ENCODE measurements at regions of chr6 and their contacts with region 1.

Region 1: DNA sequence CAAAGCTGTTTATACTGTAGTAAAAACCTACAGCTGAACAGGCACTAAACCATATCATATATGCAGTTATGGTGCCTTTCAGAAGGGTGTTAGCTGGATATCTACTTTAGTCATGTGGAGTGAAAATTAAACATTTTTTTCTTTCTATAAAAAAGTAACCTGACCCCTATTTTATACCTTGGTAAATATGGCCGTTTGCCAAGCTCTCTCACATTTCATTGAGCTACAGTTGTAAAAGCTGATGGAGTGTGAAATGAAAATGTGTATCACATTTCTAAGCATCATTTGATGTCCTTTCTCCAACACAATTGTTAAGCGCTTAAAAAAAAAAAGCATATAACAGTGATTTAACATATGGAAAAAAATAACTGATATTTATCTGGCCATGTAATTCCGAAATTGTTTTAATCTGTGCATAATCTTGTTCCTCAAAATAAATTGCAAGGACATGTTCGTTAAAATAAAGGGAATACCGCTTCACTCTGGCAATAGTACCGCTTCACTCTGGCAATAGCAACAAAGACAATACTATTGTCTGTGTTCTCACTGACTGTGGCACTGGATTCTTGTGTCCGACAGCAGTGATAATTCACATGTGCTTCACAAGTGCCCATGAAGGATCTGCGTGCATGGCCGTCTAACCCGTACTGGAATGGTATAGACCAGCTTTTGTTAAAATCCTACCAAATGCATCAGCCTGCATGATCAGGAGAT is 391.8 kb upstream of the SOX4 start:
- DNase-seq: no peak
- ATAC-seq: no peak
- H3K4me3 ChIP-seq: no peak overlapping the region
- H3K27ac ChIP-seq: no peak overlapping the region
- H3K4me1 ChIP-seq: peaks cover 1% of the 10 kb centered on the region; the same call in 1 of the 2 replicates
- H3K27me3 ChIP-seq: no peaks in the 10 kb centered on the region
- CTCF ChIP-seq: no peak
- POLR2A ChIP-seq: no peak
- RAD21 ChIP-seq: no peak

Region 2: GRCh38 chr6:21188505-21189223 is 13.1 kb before region 1 on chr6:
- CTCF ChIA-PET with region 1: no interaction called
- POLR2A ChIA-PET with region 1: no interaction called
- dilution Hi-C with region 1: no loop called
- in situ Hi-C with region 1: no loop called
- intact Hi-C with region 1: loop called (anchors 2 kb)
- DNase-seq: no peak
- ATAC-seq: no peak
- H3K4me3 ChIP-seq: no peak overlapping the region
- H3K27ac ChIP-seq: no peak overlapping the region
- H3K4me1 ChIP-seq: peaks cover 4% of the 10 kb centered on the region
- H3K27me3 ChIP-seq: no peaks in the 10 kb centered on the region
- CTCF ChIP-seq: no peak
- POLR2A ChIP-seq: no peak
- RAD21 ChIP-seq: no peak